ENCODE measurements at regions of chr4 and their contacts with region 1.

Region 1: GRCh38 chr4:2009704-2010197 is 977 bp upstream of the NELFA start:
- DNase-seq: peak in 1 of 2 donors; percentile 31
- H3K4me3 ChIP-seq: peak overlapping the region; percentile 98 to 99 (median 98)
- H3K27ac ChIP-seq: peak overlapping the region; percentile 99
- H3K4me1 ChIP-seq: no peaks in the 10 kb centered on the region
- H3K27me3 ChIP-seq: no peaks in the 10 kb centered on the region
- CTCF ChIP-seq: peak in 1 of 3 donors; percentile 17
- POLR2A ChIP-seq: no peak

Region 2: DNA sequence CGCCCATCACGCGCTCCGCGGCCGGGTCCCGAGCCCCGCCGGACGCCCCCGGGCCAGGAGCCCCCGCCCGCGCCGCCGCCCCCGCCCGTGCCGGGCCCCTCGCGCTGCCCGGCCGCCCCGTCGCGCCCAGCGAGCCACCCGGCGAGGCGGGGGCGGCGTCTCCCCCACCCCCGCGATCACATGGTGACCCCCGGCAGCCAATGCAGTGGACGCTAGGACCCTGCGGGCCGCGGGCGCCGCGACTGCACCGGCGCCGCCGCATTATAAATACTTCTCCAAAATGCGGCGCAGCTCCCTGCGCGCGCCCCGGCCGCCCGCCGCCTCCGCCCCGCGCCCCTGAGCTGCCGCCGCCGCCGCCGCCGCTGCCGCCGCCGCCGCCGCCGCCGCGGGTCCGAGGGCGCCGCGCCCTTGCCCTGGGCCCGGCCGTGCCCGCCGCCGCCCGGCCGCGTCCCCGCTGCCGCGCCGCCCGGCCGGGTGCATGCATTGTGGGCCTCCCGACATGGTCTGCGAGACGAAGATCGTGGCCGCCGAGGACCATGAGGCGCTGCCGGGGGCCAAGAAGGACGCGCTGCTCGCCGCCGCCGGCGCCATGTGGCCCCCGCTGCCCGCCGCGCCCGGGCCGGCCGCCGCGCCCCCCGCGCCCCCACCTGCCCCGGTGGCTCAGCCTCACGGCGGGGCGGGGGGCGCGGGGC is 49.4 kb after region 1 on chr4 and contains the start of gene NAT8L:
- intact Hi-C with region 1: no loop called
- DNase-seq: no peak
- H3K4me3 ChIP-seq: peak within 1 kb of the TSS; percentile 32 to 70 (median 51)
- H3K27ac ChIP-seq: no peak within 1 kb of the TSS
- H3K4me1 ChIP-seq: peaks cover 0 to 2% of the 10 kb centered on the region in 2 donors
- H3K27me3 ChIP-seq: peaks cover 16 to 36% of the 10 kb centered on the region in 2 donors
- CTCF ChIP-seq: no peak
- POLR2A ChIP-seq: no peak
- total RNA-seq, gene NAT8L: 2.5 to 13.6 (median 2.9) TPM

Region 3: DNA sequence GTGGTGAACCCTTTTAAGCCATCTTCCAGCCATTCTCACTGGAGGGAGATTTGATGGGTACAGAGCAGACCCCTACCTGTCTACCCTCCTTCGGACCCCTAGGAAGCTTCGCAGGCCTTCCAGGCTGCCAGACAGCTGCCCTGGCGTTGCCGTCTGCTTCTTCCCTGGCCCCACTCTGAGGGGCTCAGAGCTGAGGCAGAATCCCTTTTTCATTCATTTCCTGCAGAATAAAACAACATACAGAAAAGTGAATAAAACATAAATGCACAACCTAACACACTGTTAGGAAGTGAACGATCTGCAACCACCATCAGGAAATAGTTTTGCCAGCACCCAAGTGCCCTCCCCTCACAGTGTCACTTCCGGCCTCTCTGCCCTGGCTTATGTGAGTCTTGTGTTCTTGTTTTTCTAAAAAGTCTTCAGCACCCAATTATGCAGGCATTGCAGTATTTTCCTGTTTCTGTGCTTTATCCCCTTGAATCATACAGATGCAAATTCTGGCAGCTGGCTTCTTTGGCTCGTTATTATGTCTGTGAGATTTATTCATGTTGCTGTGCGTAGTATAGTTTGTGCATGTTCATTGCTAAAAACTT is 828.2 kb after region 1 on chr4:
- intact Hi-C with region 1: loop called (anchors 10 kb)
- DNase-seq: no peak
- H3K4me3 ChIP-seq: peak overlapping the region in 1 of 3 donors; percentile 22
- H3K27ac ChIP-seq: peak overlapping the region; percentile 10 to 72
- H3K4me1 ChIP-seq: peaks cover 0 to 4% of the 10 kb centered on the region in 2 donors
- H3K27me3 ChIP-seq: no peaks in the 10 kb centered on the region
- CTCF ChIP-seq: no peak
- POLR2A ChIP-seq: no peak